ENCODE measurements at regions of chr11 and their contacts with region 1.

Region 1: DNA sequence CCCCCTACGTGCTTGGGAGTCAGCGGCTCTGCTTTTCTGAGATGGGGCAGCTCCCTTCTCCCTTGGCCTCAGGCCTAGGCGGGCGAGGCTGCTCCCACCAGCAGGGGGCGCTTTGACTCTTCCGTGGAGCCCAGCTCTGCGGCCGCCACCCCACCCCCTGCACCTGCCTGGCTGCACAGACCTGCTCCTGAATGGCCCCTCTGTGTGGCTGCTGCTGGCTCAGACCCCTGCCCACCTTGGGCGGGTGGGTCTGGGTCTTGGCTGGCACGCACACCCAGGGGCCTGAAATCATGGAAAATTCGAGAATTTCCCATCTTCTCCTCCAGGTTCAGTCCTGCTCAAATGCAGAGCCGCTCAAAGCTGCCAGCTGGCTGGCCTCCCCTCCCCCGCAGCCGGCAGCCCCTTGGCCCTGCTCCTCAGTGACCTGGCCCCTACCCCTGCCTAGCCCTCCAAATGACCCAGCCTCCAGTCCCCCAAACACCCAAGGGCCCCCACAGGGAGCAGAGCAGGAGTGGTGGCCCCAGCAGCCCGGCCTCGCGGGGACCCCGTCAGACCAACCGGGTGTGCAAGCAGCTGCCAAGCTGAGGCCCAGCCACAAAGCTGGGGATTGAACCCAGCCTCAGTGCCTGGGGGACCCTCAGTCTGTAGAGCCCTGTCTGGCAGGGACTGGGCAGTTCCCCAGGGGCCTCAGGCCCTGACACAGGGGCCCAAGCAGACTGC is 9.0 kb downstream of the PRR33 start:
- DNase-seq: peak; percentile 92

Region 2: DNA sequence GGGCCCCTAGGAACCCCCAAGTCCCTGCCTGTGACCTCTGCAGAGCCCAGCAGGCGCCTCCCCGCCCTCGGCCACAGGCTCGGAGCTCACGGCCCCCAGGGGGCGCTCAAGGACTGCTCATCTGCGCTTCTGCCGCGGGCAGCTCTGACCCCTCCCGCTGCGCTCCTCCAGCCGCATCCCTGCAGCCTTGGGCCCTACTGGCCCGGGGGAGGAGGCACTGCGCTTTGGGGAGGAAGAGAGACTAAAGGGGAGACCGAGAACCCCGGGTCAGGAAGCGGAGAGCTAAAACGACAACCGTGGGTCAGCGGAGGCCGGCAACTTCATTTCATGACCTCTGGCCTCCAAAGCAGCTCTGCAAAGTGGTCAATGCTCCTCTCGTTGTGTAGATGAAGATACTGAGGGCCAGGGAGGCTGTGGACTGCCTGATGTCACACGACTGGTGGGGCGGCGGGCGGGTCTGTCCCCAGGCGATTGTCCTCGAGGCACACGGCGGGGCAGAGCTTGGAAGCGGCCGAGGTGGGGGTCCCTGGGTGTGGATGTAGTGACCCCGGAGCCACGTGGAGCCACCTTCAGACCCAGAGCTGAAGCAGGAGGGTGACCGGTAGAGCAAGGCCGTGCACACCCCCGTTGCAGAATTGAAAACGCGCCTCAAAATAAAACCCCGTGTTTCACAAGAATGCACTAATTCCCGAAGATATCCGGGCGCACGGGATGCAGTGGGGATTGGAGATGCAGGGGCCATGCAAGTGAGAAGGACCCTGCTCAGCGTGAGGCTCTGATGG is 188.4 kb before region 1 on chr11:
- intact Hi-C with region 1: loop called (anchors 5 kb)
- DNase-seq: peak; percentile 94

Region 3: GRCh38 chr11:1837171-1838076 is 45.3 kb before region 1 on chr11:
- intact Hi-C with region 1: loop called (anchors 5 kb)
- DNase-seq: no peak

Region 4: GRCh38 chr11:1917671-1918516 is 35.2 kb after region 1 on chr11:
- intact Hi-C with region 1: loop called (anchors 5 kb)
- DNase-seq: no peak

Region 5: GRCh38 chr11:2027708-2028107 is 145.0 kb after region 1 on chr11:
- intact Hi-C with region 1: no loop called
- DNase-seq: no peak

Measured in cardiac septum (tissue), 1 donor.